Prostate gland (tissue), 2 donors: ENCODE measurements at regions of chr10 and their contacts with region 1.

Region 1: GRCh38 chr10:115092555-115093285 is 445 bp upstream of the ATRNL1 start:
- DNase-seq: no peak
- H3K4me3 ChIP-seq: peak overlapping the region; percentile 46 to 47
- H3K27ac ChIP-seq: peak overlapping the region; percentile 43 to 48
- H3K4me1 ChIP-seq: no peaks in the 10 kb centered on the region
- H3K27me3 ChIP-seq: no peaks in the 10 kb centered on the region
- CTCF ChIP-seq: no peak
- POLR2A ChIP-seq: no peak

Region 2: DNA sequence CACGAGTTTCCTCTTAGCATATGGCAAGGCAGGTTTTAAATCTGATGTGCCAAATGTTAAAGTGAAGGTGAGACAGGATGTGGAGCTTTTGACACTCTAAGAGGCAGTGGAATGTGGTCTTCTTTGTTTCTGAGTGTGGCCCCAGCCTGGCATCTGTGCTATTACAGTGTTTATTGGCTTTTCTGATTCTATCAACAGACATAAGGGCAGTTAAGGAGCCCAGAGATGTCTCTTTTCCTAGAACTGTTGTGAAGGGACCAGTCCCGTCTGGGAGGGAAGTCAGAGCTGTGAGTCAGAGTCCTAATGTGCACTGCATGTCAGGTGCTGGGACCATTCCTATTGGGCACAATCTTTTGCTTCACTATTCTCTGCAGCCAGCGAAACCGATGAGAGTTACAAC is 122.2 kb before region 1 on chr10:
- intact Hi-C with region 1: loop called (anchors 10 kb)
- DNase-seq: no peak
- H3K4me3 ChIP-seq: no peak overlapping the region
- H3K27ac ChIP-seq: no peak overlapping the region
- H3K4me1 ChIP-seq: no peaks in the 10 kb centered on the region
- H3K27me3 ChIP-seq: no peaks in the 10 kb centered on the region
- CTCF ChIP-seq: no peak
- POLR2A ChIP-seq: no peak

Region 3: GRCh38 chr10:115379064-115379463 is 286.3 kb after region 1 on chr10:
- intact Hi-C with region 1: no loop called
- DNase-seq: no peak
- H3K4me3 ChIP-seq: no peak overlapping the region
- H3K27ac ChIP-seq: no peak overlapping the region
- H3K4me1 ChIP-seq: no peaks in the 10 kb centered on the region
- H3K27me3 ChIP-seq: no peaks in the 10 kb centered on the region
- CTCF ChIP-seq: no peak
- POLR2A ChIP-seq: no peak